Cardiac septum (tissue), 1 donor: ENCODE measurements at regions of chr19 and their contacts with region 1.

Region 1: DNA sequence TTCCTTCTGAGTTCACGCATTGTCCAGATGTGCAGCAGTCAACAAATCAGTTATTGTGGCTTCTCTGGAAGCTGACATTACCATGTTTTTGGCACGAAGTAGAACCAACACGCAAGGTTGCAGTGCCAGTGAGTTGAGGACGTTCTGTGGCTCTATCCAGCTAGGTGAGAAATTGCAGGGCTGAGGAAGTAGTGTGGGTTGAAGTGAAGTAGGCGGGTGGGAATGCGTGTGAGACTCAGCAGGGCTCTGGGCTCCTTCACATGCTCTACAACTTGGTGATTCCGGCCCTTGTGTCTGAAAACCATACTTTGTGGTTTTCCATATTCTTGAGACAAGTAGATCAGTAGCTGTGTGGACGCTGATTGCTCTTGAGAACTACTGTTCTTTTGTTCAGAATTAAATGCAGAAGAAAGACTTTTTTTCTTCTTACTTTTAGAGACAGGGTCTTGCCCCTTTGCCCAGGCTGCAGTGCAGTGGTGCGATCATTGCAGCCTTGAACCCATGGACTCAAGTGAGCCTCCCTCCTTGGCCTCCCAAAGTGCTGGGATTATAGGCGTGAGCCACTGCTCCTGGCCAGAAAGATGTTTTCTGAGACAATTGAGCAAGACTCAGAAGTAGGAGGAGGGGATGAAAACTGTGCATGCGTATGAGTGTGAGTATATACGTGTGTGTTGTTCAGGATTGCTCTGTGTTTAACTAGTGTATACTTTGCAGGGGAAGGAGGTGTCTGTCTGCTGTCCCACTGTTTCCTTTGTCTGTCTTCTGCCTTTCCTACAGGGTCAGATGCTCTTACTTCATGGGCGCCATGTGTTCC is 46.2 kb downstream of the GATAD2A start:
- DNase-seq: no peak

Region 2: GRCh38 chr19:19433666-19434213 is 17.9 kb before region 1 on chr19:
- intact Hi-C with region 1: loop called (anchors 2 kb)
- DNase-seq: no peak